ENCODE measurements at regions of chr22 and their contacts with region 1.

Region 1: DNA sequence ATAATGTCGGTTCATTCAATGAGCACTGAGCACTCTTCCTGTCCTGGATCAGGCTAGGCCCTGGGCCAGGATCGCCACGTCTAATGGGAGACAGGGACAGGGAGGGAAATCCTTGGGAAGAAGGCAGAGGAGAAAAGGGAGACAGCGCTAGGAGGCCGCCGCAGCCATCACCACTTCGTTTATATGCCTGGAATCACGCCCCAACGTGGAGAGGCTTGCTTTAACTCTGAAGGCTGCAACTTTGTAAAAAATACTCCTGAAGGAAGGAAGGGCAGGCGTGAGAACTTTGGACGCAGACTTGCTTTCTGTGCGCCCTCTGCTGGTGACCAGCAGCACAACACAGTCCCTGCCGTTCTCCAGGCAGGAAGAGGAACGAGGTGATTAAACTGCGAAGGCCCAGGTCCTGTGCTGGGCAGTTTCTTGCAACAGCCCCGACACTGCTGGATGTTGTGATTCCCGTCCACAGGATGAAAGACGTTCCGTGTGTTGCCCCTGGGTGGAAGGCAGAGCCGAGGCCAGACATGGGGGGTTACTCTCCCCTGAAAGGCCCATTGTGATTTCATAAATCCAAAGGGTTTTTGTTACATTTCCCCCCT is 22.1 kb downstream of the RIBC2 start:
- DNase-seq: peak; percentile 89 to 92
- H3K4me3 ChIP-seq: no peak overlapping the region
- H3K4me3 Mint-ChIP-seq: peak overlapping the region; percentile 22
- H3K27ac Mint-ChIP-seq: peak overlapping the region; percentile 68
- H3K4me1 ChIP-seq: peaks cover 28% of the 10 kb centered on the region
- H3K4me1 Mint-ChIP-seq: peaks cover 13% of the 10 kb centered on the region
- H3K27me3 ChIP-seq: no peaks in the 10 kb centered on the region
- H3K27me3 Mint-ChIP-seq: no peaks in the 10 kb centered on the region
- CTCF ChIP-seq: peak; percentile 81 to 96

Region 2: GRCh38 chr22:45268958-45269844 is 166.4 kb before region 1 on chr22:
- CTCF ChIA-PET with region 1: no interaction called
- POLR2A ChIA-PET with region 1: no interaction called
- intact Hi-C with region 1: loop called (anchors 1 kb)
- DNase-seq: peak; percentile 76 to 94
- H3K4me3 ChIP-seq: peak overlapping the region; percentile 76
- H3K4me3 Mint-ChIP-seq: peak overlapping the region; percentile 95
- H3K27ac Mint-ChIP-seq: peak overlapping the region; percentile 95
- H3K4me1 ChIP-seq: peaks cover 42% of the 10 kb centered on the region
- H3K4me1 Mint-ChIP-seq: peaks cover 28% of the 10 kb centered on the region
- H3K27me3 ChIP-seq: no peaks in the 10 kb centered on the region
- H3K27me3 Mint-ChIP-seq: no peaks in the 10 kb centered on the region
- CTCF ChIP-seq: peak; percentile 51 to 88

Region 3: DNA sequence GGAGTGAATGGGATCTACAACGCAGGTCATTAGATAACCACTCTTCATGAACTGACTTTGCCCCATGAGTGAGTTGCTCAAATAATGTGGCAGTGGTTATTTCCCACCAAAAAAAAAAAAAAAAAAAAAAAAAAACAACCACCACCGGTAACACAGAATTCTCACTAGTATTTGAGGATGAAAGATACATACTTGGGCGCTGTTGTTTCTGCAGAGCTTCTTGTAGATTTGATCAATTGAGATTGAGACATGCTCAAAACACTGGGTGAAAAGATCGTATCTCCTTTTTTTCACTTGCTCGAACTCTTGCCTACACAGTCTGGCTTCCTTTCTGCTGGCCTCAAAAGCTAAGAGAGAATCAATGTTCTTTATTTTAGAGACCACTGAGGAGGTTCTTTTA is 81.9 kb before region 1 on chr22:
- CTCF ChIA-PET with region 1: no interaction called
- POLR2A ChIA-PET with region 1: no interaction called
- intact Hi-C with region 1: loop called (anchors 5 kb)
- DNase-seq: no peak
- H3K4me3 ChIP-seq: no peak overlapping the region
- H3K4me3 Mint-ChIP-seq: no peak overlapping the region
- H3K27ac Mint-ChIP-seq: no peak overlapping the region
- H3K4me1 ChIP-seq: peaks cover 19% of the 10 kb centered on the region
- H3K4me1 Mint-ChIP-seq: peaks cover 7% of the 10 kb centered on the region
- H3K27me3 ChIP-seq: no peaks in the 10 kb centered on the region
- H3K27me3 Mint-ChIP-seq: no peaks in the 10 kb centered on the region
- CTCF ChIP-seq: no peak

Region 4: GRCh38 chr22:45397806-45398205 is 37.8 kb before region 1 on chr22:
- CTCF ChIA-PET with region 1: no interaction called
- POLR2A ChIA-PET with region 1: no interaction called
- intact Hi-C with region 1: no loop called
- DNase-seq: no peak
- H3K4me3 ChIP-seq: no peak overlapping the region
- H3K4me3 Mint-ChIP-seq: no peak overlapping the region
- H3K27ac Mint-ChIP-seq: no peak overlapping the region
- H3K4me1 ChIP-seq: no peaks in the 10 kb centered on the region
- H3K4me1 Mint-ChIP-seq: no peaks in the 10 kb centered on the region
- H3K27me3 ChIP-seq: no peaks in the 10 kb centered on the region
- H3K27me3 Mint-ChIP-seq: no peaks in the 10 kb centered on the region
- CTCF ChIP-seq: no peak

Region 5: GRCh38 chr22:45413368-45414211 is 22.1 kb before region 1 on chr22 and contains the starts of genes RIBC2 and SMC1B:
- CTCF ChIA-PET with region 1: interaction called, 8 read pairs
- POLR2A ChIA-PET with region 1: interaction called, 7 read pairs
- intact Hi-C with region 1: loop called (anchors 1 kb)
- DNase-seq: peak; percentile 95 to 96
- H3K4me3 ChIP-seq: peak within 1 kb of the TSS; percentile 71
- H3K4me3 Mint-ChIP-seq: peak within 1 kb of the TSS; percentile 94
- H3K27ac Mint-ChIP-seq: peak within 1 kb of the TSS; percentile 99
- H3K4me1 ChIP-seq: peaks cover 14% of the 10 kb centered on the region
- H3K4me1 Mint-ChIP-seq: no peaks in the 10 kb centered on the region
- H3K27me3 ChIP-seq: no peaks in the 10 kb centered on the region
- H3K27me3 Mint-ChIP-seq: no peaks in the 10 kb centered on the region
- CTCF ChIP-seq: no peak
- total RNA-seq, gene RIBC2: 11.5 and 14.1 TPM in 2 replicates
- total RNA-seq, gene SMC1B: 4.6 and 5.3 TPM in 2 replicates

Region 6: DNA sequence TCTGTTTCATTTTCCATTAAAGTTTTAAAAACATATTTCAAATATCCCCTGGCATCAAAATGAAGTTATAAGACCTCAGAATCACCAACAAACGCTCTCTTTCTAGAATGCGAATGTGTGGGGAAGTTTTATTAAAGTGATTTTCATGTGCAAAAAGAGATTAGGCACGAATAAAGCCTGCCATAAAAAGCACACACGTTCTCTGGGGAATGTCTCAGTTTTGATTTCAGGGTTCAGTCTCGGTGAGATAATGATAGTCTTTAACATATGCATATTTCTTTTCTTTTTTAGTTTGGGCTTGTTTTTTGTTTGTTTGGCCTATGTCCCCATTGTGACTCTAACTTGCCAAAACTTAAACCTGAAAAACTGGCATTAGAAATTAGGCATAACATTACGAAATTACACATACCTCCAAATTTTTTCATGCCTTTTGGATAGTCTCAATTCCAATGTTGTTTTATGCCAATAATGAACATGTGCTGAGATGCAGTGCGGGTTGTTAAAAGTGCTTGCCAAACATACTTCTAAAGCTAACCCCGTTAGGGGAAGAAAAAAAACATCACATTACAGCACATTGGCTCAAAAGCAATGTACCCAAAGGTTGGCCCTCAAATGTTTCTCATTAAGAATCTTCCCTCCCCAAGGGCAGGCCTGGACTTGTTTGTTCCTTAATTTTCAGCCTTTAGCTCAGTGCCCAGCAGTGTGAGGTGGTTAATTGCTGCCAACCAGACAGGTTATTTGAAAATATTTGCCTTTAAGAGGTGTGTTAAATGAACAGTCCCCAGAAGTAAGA is 33.8 kb after region 1 on chr22:
- CTCF ChIA-PET with region 1: no interaction called
- POLR2A ChIA-PET with region 1: no interaction called
- intact Hi-C with region 1: no loop called
- DNase-seq: no peak
- H3K4me3 ChIP-seq: no peak overlapping the region
- H3K4me3 Mint-ChIP-seq: no peak overlapping the region
- H3K27ac Mint-ChIP-seq: no peak overlapping the region
- H3K4me1 ChIP-seq: peaks cover 33% of the 10 kb centered on the region
- H3K4me1 Mint-ChIP-seq: peaks cover 31% of the 10 kb centered on the region
- H3K27me3 ChIP-seq: no peaks in the 10 kb centered on the region
- H3K27me3 Mint-ChIP-seq: no peaks in the 10 kb centered on the region
- CTCF ChIP-seq: no peak